Natural killer cell (primary cell): ENCODE measurements at regions of chr9 and their contacts with region 1.

Region 1: DNA sequence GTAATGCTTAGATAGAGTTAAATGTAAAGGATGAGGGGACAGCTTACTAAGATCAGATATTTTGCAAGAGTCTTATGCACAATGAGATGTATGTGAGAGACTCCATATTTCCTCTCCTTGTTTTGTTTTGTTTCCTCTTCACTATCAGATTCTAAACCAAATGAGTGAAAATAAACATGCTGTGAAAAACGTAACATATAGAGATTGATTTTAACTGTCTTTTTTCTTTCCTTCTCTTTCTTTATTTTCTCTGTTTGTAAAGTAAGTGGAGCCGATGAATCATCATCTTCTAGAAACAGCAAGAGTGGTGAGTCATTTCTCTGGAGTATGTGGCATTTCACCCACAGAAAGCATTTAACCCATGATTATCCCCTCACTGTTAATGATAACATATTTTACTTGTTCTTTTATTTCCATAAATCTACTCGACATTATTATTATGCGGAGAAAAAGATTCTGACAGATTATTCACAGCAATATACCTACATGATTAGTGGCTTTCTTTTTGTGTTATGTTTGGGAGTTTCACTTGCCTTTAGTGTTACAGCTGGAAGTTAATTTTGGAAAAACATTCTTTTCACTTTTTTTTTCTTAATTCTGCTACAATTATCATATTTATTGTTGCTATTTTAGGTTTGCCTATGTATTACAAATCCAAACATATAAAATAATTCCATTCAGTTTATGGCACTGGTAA is 2.1 kb upstream of the ANXA1 start:
- DNase-seq: peak in 1 of 2 donors; percentile 65
- ATAC-seq: peak; percentile 52 to 67 (median 65)
- H3K4me3 ChIP-seq: peak overlapping the region; percentile 3
- H3K4me3 Mint-ChIP-seq: peak overlapping the region; percentile 70
- H3K27ac ChIP-seq: peak overlapping the region; percentile 61
- H3K27ac Mint-ChIP-seq: peak overlapping the region; percentile 87 to 95
- H3K4me1 ChIP-seq: peaks cover 13% of the 10 kb centered on the region
- H3K4me1 Mint-ChIP-seq: peaks cover 41 to 52% of the 10 kb centered on the region in 2 donors
- H3K27me3 ChIP-seq: no peaks in the 10 kb centered on the region
- H3K27me3 Mint-ChIP-seq: no peaks in the 10 kb centered on the region
- CTCF ChIP-seq: no peak

Region 2: DNA sequence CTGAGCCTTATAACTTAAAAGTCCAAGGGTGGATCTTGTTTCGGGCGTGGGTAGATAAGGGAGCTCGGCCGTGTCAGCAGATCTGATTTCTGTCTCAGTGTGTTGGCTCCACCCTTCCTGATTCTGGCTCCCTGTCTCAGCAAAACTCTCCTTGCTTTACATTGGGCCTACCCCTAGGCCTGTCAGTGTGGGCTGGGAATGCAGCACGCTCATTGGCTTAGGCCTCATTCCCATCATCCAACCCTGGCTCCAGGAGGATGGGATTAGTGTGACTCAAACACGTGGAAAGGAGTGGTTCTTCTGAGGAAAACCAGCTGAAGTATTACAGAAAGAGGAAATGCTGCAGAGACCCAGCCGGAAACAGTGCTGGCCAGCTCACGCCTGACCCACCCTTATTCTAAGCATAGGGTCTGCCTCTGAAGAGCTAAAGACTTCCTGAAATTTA is 844.4 kb before region 1 on chr9:
- intact Hi-C with region 1: loop called (anchors 10 kb)
- DNase-seq: peak; percentile 28 to 43
- ATAC-seq: peak; percentile 70 to 91 (median 72)
- H3K4me3 ChIP-seq: peak overlapping the region; percentile 32
- H3K4me3 Mint-ChIP-seq: peak overlapping the region; percentile 87
- H3K27ac ChIP-seq: peak overlapping the region; percentile 86
- H3K27ac Mint-ChIP-seq: peak overlapping the region; percentile 93
- H3K4me1 ChIP-seq: peaks cover 55% of the 10 kb centered on the region
- H3K4me1 Mint-ChIP-seq: peaks cover 56 to 59% of the 10 kb centered on the region in 2 donors
- H3K27me3 ChIP-seq: no peaks in the 10 kb centered on the region
- H3K27me3 Mint-ChIP-seq: no peaks in the 10 kb centered on the region
- CTCF ChIP-seq: no peak

Region 3: DNA sequence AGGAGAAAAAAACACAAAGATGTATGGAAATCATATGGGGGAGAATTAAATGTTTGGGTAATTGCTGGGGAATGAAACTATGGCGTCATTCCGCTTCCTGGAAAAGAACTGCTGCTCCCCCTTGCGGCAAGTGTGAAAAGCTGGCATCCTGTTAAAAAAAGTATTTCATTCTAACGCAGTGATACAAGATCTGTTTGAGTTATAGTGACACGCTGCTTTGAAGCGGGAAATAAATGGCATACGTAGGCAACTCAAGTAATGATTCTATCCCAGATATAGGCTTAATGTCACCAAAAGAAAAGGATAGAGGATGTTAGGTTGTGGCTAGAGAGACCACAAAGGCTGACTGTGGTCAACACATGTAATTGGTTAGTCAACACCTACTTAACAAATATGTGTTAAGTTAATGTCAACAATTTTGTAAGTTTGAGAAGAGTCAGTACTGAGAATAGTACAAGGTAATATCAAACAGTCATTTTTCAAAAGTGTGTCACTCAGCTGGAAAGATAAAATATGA is 126.4 kb before region 1 on chr9:
- intact Hi-C with region 1: loop called (anchors 10 kb)
- DNase-seq: peak; percentile 16 to 72
- ATAC-seq: peak; percentile 77 to 91 (median 80)
- H3K4me3 ChIP-seq: no peak overlapping the region
- H3K4me3 Mint-ChIP-seq: peak overlapping the region; percentile 70
- H3K27ac ChIP-seq: no peak overlapping the region
- H3K27ac Mint-ChIP-seq: peak overlapping the region; percentile 24 to 47
- H3K4me1 ChIP-seq: peaks cover 4% of the 10 kb centered on the region
- H3K4me1 Mint-ChIP-seq: peaks cover 12% of the 10 kb centered on the region in 2 donors
- H3K27me3 ChIP-seq: peaks cover 5% of the 10 kb centered on the region
- H3K27me3 Mint-ChIP-seq: peaks cover 6 to 24% of the 10 kb centered on the region in 2 donors
- CTCF ChIP-seq: peak; percentile 65

Region 4: GRCh38 chr9:73167614-73168013 is 18.1 kb after region 1 on chr9:
- intact Hi-C with region 1: loop called (anchors 1 kb)
- DNase-seq: no peak
- ATAC-seq: peak; percentile 75 to 82 (median 77)
- H3K4me3 ChIP-seq: no peak overlapping the region
- H3K4me3 Mint-ChIP-seq: no peak overlapping the region
- H3K27ac ChIP-seq: peak overlapping the region; percentile 61
- H3K27ac Mint-ChIP-seq: peak overlapping the region; percentile 80 to 81
- H3K4me1 ChIP-seq: peaks cover 3% of the 10 kb centered on the region
- H3K4me1 Mint-ChIP-seq: peaks cover 22 to 26% of the 10 kb centered on the region in 2 donors
- H3K27me3 ChIP-seq: no peaks in the 10 kb centered on the region
- H3K27me3 Mint-ChIP-seq: no peaks in the 10 kb centered on the region
- CTCF ChIP-seq: no peak

Region 5: DNA sequence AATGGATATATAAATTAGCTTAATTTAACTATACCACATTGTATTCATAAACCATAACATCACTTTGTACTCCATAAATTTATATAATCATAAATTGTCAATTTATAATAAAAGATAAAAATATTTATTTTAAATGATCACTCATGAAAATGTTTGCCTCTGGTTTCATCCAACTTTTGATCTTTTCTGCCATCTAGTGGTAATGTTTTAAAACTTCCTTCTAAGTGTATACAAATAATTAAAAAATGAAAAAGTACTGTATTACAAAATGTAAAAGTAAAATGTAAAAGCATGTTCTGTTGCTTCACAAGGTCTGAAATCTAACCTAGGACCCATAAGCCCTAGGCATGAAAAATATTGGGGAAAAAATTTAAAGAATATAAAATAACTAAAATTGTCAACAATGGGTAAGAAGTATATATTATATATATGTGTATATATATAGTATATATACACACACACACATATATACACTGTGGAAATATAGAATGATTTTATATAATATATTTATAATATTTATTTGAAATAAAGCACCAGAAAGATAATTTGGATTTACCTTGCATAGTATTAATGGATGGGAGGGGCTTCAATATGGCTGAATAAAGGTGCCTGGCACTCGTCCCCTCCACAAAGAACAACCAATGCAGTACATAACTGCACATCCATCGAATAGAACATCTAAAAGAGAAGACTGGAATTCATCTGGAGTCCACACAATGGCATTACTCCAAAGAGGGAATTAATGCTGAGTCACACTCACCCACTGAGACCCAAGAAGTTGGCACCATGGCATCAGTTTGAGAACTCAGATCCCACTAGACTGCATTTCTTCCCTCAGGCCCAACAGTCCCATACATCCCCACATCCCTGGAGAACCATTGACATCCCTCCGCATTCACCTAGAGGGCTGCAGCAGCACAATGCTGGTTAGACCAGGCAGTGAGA is 34.7 kb after region 1 on chr9:
- intact Hi-C with region 1: no loop called
- DNase-seq: peak in 1 of 2 donors; percentile 78
- ATAC-seq: peak in 1 of 3 donors; percentile 45
- H3K4me3 ChIP-seq: no peak overlapping the region
- H3K4me3 Mint-ChIP-seq: no peak overlapping the region
- H3K27ac ChIP-seq: no peak overlapping the region
- H3K27ac Mint-ChIP-seq: no peak overlapping the region
- H3K4me1 ChIP-seq: no peaks in the 10 kb centered on the region
- H3K4me1 Mint-ChIP-seq: no peaks in the 10 kb centered on the region
- H3K27me3 ChIP-seq: no peaks in the 10 kb centered on the region
- H3K27me3 Mint-ChIP-seq: peaks cover 19 to 33% of the 10 kb centered on the region in 2 donors
- CTCF ChIP-seq: peak; percentile 86

Region 6: GRCh38 chr9:73847536-73847935 is 698.0 kb after region 1 on chr9:
- intact Hi-C with region 1: no loop called
- DNase-seq: no peak
- ATAC-seq: no peak
- H3K4me3 ChIP-seq: no peak overlapping the region
- H3K4me3 Mint-ChIP-seq: no peak overlapping the region
- H3K27ac ChIP-seq: no peak overlapping the region
- H3K27ac Mint-ChIP-seq: no peak overlapping the region
- H3K4me1 ChIP-seq: no peaks in the 10 kb centered on the region
- H3K4me1 Mint-ChIP-seq: no peaks in the 10 kb centered on the region
- H3K27me3 ChIP-seq: no peaks in the 10 kb centered on the region
- H3K27me3 Mint-ChIP-seq: peaks cover 0 to 7% of the 10 kb centered on the region in 2 donors
- CTCF ChIP-seq: no peak

Region 7: GRCh38 chr9:75088260-75088905 is 1938.9 kb after region 1 on chr9 and contains the start of gene OSTF1:
- intact Hi-C with region 1: loop called (anchors 2 kb)
- DNase-seq: peak; percentile 95 to 97
- ATAC-seq: peak; percentile 75 to 95 (median 87)
- H3K4me3 ChIP-seq: peak within 1 kb of the TSS; percentile 98
- H3K4me3 Mint-ChIP-seq: peak within 1 kb of the TSS; percentile 100
- H3K27ac ChIP-seq: peak within 1 kb of the TSS; percentile 92
- H3K27ac Mint-ChIP-seq: peak within 1 kb of the TSS; percentile 92 to 100
- H3K4me1 ChIP-seq: peaks cover 39% of the 10 kb centered on the region
- H3K4me1 Mint-ChIP-seq: peaks cover 71 to 83% of the 10 kb centered on the region in 2 donors
- H3K27me3 ChIP-seq: no peaks in the 10 kb centered on the region
- H3K27me3 Mint-ChIP-seq: no peaks in the 10 kb centered on the region
- CTCF ChIP-seq: no peak
- total RNA-seq, gene OSTF1: 140 to 187 (median 177) TPM